ENCODE measurements at regions of chr15 and their contacts with region 1.

Region 1: DNA sequence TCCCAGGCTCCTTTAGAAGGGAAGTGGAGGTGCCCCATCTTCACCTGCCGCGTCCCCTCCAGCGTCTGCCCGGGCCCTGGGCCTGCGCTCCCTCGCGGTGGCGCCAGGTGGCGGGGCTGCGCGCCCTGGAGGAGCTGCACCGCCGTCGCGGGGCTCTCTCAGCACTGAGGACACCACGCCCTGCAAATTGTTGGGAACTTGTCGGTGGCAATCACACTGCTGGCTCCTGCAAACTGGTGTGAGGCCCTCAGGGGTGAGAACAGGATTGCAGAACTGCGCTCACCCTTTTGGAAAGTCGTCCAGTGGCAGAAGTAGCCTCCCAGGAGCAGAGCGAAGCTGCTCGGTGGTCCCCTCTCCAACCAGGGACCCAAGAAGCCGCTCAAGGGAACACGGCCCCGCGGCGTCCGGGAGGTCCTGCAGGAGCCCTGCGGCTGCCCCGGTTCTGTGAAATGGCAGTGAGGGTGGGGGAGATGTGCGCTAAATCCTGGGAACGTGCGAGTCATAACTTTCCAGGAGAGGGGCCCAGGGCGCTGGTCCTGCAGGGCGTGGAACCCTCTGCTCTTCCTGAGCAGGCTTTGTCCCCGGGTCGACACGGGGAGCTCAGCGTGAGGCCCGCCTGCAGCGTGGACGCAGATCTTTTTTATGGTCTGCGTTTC is 995 bp upstream of the LRRK1 start:
- DNase-seq: peak; percentile 92
- H3K4me3 Mint-ChIP-seq: peak overlapping the region; percentile 77
- H3K27ac Mint-ChIP-seq: no peak overlapping the region
- H3K4me1 Mint-ChIP-seq: peaks cover 20% of the 10 kb centered on the region
- H3K27me3 Mint-ChIP-seq: peaks cover 68% of the 10 kb centered on the region

Region 2: DNA sequence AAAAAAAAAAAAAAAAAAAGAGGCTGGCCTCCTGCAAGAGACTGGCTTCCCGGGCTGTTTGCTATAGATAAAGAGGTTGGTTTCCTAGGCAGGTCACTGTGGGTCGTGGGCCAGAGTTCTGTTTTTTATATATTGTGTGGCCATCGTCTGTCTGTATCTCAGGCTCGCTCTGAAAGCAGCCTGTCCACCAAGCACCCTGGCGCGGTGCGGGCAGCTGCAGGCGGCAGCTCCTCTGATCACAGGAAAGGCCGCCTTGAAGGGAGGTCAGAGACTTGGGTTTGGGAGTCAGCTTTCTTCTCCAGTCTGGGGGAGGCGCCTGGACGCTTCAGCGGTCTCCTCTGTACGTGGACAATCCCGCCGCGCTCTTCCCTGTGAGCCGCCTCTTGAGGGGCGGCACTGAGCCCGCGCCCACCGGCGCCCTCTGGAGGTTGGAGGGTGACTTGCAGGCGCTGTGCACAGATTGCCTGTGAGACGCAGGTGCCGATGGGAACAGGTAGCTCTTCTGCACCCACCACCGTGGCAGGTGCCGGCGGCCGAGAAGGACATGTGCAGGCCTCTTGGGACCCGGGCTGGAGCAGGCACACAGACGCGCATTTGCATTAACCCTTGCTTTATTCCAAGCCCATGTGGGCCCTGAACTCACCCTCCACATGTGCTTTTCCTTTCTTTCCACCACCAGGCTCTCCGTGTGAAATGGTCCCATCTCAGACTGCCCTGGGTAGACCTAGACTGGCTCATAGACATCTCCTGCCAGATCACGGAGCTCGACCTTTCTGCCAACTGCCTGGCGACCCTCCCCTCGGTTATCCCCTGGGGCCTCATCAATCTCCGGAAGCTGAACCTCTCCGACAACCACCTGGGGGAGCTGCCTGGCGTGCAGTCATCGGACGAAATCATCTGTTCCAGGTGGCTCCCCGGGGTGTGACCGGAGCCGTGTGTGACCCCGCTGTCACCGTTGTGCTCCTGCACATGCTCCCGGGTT is 90.3 kb after region 1 on chr15:
- intact Hi-C with region 1: loop called (anchors 1 kb)
- DNase-seq: peak; percentile 96
- H3K4me3 Mint-ChIP-seq: peak overlapping the region; percentile 92
- H3K27ac Mint-ChIP-seq: no peak overlapping the region
- H3K4me1 Mint-ChIP-seq: peaks cover 14% of the 10 kb centered on the region
- H3K27me3 Mint-ChIP-seq: peaks cover 17% of the 10 kb centered on the region

Measured in activated CD4-positive, alpha-beta T cell treated with anti-CD3 and anti-CD28 coated beads, Interleukin-2, amount 10 ng/mL, durations not matched to agents 24 days and 14 days (primary cell).